HepG2 (cell line): ENCODE measurements at regions of chr7 and their contacts with region 1.

Region 1: DNA sequence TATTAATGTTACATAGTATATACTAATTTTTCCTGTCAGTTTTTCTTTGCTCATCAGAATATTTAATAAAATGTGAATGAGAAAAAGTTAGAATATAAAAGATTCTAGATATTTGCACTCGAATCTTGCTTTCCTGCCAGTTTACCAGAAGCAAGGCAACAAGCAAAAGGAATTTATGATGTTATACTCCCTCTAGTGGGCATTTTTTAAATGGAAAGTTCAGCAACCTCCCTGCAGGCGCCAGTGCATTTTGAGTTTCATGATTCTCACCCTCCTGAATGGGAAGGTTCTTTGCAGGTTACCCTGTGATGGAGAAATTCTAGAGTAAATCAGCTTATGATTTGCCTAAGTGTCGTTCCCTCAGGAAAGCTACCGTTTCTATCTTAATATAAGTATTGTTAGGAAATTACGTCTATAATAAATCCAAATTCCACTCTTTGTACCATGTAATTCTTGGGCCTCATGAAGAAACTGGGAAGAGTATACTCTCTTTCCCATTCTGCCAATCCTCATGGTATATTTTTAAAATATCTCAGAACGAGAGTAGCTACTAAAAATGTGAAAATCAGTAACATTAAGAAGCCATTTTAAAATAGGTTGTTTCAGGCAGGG is 350.0 kb downstream of the CRPPA start:
- DNase-seq: peak; percentile 50
- ATAC-seq: peak; percentile 72
- H3K4me3 ChIP-seq: no peak overlapping the region
- H3K27ac ChIP-seq: no peak overlapping the region
- H3K4me1 ChIP-seq: no peaks in the 10 kb centered on the region
- H3K27me3 ChIP-seq: no peaks in the 10 kb centered on the region
- CTCF ChIP-seq: peak; percentile 70
- EP300 ChIP-seq: no peak
- POLR2A ChIP-seq: no peak
- RAD21 ChIP-seq: no peak

Region 2: DNA sequence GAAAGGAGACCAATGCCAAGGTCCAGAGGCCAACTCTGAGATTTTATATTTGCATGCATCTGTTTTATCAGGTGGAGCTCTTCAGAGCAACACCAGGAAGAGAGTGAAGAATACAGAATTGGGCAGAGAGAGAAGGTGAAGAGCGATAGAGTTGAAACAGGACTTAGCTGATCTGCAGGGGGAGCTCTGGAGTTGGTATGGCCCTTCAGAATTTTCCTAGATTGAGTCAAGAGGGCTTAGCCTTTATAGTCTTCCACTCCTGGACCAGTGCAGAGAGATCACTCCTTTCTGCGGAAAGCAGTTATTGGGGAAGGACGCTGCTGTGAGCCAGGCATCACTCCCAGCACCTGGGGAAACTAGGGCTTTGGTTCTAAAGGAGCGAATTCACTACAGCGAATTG is 1063.8 kb before region 1 on chr7:
- CTCF ChIA-PET with region 1: no interaction called
- POLR2A ChIA-PET with region 1: no interaction called
- in situ Hi-C with region 1: loop called (anchors 25 kb)
- intact Hi-C with region 1: loop called (anchors 5 kb)
- DNase-seq: peak; percentile 3
- ATAC-seq: peak; percentile 60
- H3K4me3 ChIP-seq: no peak overlapping the region
- H3K27ac ChIP-seq: no peak overlapping the region
- H3K4me1 ChIP-seq: no peaks in the 10 kb centered on the region
- H3K27me3 ChIP-seq: no peaks in the 10 kb centered on the region
- CTCF ChIP-seq: peak; percentile 31
- EP300 ChIP-seq: no peak
- POLR2A ChIP-seq: no peak
- RAD21 ChIP-seq: no peak

Region 3: DNA sequence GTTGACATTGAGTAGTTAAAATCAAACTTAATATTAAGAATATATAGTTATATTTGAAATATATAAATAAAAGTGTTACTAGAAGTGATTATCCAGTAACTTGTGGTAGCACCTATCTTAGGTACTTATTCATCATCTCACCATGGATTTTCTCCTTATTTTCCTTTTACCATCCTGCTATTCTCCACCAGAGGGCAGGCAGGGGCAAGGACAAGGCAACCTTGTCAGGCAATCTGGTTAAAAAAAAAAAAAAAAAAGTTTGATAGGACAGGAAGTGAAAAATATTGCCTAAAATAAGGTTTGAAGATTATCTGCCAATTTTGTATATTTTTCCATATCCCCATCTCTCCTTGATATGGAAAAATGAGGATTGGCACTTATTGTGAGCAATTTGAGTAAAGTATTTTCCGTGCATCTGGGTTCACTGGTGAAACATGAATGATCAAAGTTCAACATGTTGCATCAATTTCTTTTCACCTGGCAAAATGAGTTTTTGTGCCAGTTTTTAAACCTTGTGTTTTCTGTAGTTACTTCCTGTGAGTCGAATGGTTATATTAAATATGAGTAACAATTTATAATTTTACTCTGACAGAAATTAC is 766.3 kb before region 1 on chr7:
- CTCF ChIA-PET with region 1: interaction called, 7 read pairs
- POLR2A ChIA-PET with region 1: no interaction called
- in situ Hi-C with region 1: loop called (anchors 25 kb)
- intact Hi-C with region 1: loop called (anchors 1 kb)
- DNase-seq: peak; percentile 33
- ATAC-seq: no peak
- H3K4me3 ChIP-seq: no peak overlapping the region
- H3K27ac ChIP-seq: no peak overlapping the region
- H3K4me1 ChIP-seq: no peaks in the 10 kb centered on the region
- H3K27me3 ChIP-seq: no peaks in the 10 kb centered on the region
- CTCF ChIP-seq: peak; percentile 40
- EP300 ChIP-seq: no peak
- POLR2A ChIP-seq: no peak
- RAD21 ChIP-seq: no peak

Region 4: GRCh38 chr7:15720849-15721471 is 350.4 kb before region 1 on chr7:
- CTCF ChIA-PET with region 1: no interaction called
- POLR2A ChIA-PET with region 1: no interaction called
- in situ Hi-C with region 1: no loop called
- intact Hi-C with region 1: loop called (anchors 10 kb)
- DNase-seq: peak; percentile 2
- ATAC-seq: no peak
- H3K4me3 ChIP-seq: no peak overlapping the region
- H3K27ac ChIP-seq: no peak overlapping the region
- H3K4me1 ChIP-seq: no peaks in the 10 kb centered on the region
- H3K27me3 ChIP-seq: no peaks in the 10 kb centered on the region
- CTCF ChIP-seq: peak; percentile 46
- EP300 ChIP-seq: no peak
- POLR2A ChIP-seq: no peak
- RAD21 ChIP-seq: no peak

Region 5: DNA sequence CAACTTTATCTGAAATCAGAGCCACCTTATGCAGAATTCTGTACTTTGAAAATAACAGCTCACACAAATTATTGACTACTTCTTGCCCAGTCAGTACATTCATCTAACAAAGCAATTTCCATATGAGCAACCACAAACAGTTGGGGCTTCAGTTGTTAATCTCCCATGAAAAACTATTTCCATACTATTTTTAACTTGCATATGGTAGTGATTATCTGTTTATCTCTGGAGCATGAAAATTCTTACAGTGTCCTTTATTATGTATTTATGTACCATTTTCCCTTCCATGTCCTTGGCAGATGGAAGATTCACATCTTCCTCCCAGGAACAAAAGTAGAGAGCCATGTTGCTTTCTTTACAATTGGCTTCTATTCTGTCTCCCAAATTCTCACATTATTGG is 64.3 kb after region 1 on chr7:
- CTCF ChIA-PET with region 1: no interaction called
- POLR2A ChIA-PET with region 1: no interaction called
- in situ Hi-C with region 1: no loop called
- intact Hi-C with region 1: no loop called
- DNase-seq: no peak
- ATAC-seq: no peak
- H3K4me3 ChIP-seq: no peak overlapping the region
- H3K27ac ChIP-seq: no peak overlapping the region
- H3K4me1 ChIP-seq: no peaks in the 10 kb centered on the region
- H3K27me3 ChIP-seq: no peaks in the 10 kb centered on the region
- CTCF ChIP-seq: no peak
- EP300 ChIP-seq: no peak
- POLR2A ChIP-seq: no peak
- RAD21 ChIP-seq: no peak